WTC11 (cell line): ENCODE measurements at regions of chr2 and their contacts with region 1.

Region 1: DNA sequence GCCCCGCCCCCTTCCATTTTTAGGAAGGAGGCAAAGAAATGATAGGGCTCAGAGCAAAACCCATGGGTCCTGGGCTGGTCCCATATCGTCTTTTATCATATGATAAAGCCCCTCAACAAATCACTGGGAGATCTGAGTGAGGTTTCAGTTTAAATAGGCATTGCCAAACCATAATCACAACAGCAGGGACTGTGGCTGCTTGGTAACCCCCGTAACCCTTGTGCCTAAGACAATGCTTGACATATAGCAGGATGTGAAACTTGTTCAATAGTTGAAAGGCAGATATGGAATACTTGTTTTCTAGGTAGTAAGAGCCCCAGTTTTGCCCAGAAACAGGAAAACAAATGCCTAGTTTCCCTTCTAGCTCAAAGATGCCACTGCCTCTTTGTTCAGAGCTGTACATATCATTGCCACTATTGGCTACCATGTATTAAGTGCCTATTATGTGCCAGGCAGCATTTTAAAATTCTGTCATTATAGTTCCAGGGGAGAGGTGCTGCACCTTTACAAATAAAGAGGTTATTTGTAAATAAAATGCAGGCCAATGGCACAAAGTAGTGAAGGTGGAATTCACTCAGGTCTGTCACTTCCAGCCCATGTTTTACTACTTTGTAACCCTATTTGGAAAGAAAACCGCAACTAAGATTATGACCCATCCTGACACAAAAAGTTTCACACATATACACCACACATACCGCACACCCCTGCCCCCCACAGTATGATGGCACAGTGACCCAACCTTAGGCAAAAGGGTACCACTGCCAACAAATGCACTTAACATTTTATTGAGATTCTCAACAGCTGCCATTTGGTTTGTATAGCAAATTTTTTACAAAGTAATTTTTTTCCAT is 14.2 kb downstream of the NAGK start:
- DNase-seq: no peak
- ATAC-seq: no peak
- H3K4me3 Mint-ChIP-seq: no peak overlapping the region
- H3K27ac Mint-ChIP-seq: peak overlapping the region; percentile 58
- H3K4me1 Mint-ChIP-seq: peaks cover 52% of the 10 kb centered on the region
- H3K27me3 Mint-ChIP-seq: no peaks in the 10 kb centered on the region; the same call in 1 of the 2 replicates
- CTCF ChIP-seq: no peak

Region 2: DNA sequence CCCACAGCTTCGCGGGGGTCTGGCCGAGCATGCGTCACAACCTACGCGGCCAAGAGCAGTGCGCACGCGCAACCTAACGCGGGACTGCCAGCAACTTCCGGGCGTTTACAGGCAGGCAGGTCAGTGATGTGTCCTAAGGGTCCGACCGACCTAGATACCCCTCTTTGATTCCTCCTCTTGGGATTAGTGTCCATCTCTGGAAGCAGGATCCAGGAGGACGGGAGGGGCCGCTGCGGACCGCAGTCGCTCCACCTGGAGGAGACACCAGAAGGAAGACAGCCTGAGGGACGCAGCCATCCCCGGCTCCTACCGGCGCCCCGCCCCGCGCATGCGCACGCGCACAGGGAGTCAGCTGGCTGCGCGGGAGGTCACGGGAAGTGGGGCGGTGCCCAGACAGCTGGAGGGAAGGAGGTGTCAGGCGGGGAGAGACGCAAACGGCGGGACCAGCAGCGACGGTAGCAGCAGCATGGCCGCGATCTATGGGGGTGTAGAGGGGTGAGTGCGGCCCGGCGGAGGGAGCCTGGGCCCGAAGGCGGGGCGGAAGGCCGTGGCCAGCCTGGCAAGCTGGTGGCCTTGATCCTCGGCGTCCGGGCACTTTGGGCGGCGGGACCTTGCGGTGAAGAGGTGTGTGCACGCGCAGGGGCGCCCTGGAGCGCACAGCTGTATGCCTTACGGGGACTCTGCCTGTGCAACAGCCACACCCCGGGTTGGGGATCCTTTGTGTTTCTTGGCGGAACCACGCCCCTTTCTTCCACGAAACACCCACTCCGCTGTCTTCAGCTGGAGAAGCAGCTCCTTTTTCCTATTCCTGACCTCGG is 14.2 kb before region 1 on chr2 and contains the start of gene NAGK:
- CTCF ChIA-PET with region 1: interaction called, 29 read pairs
- POLR2A ChIA-PET with region 1: interaction called, 6 read pairs
- DNase-seq: peak; percentile 96
- ATAC-seq: peak; percentile 83
- H3K4me3 Mint-ChIP-seq: peak within 1 kb of the TSS; percentile 97
- H3K27ac Mint-ChIP-seq: peak within 1 kb of the TSS; percentile 98
- H3K4me1 Mint-ChIP-seq: peaks cover 32% of the 10 kb centered on the region
- H3K27me3 Mint-ChIP-seq: peaks cover 2% of the 10 kb centered on the region; the same call in 1 of the 2 replicates
- CTCF ChIP-seq: no peak
- total RNA-seq, gene NAGK: 56.1 to 58.9 TPM (median 57.7 TPM) in 3 replicates